ENCODE measurements at regions of chr2 and their contacts with region 1.

Region 1: GRCh38 chr2:55050133-55050994 is at the start of gene RTN4:
- DNase-seq: peak; percentile 99
- H3K4me3 Mint-ChIP-seq: peak within 1 kb of the TSS; percentile 97
- H3K27ac Mint-ChIP-seq: peak within 1 kb of the TSS; percentile 97
- H3K4me1 Mint-ChIP-seq: peaks cover 58% of the 10 kb centered on the region
- H3K27me3 Mint-ChIP-seq: no peaks in the 10 kb centered on the region
- total RNA-seq, gene RTN4: 76.4 to 76.7 TPM

Region 2: GRCh38 chr2:54330162-54330925 is 720.0 kb before region 1 on chr2:
- CTCF ChIA-PET with region 1: no interaction called
- intact Hi-C with region 1: loop called (anchors 5 kb)
- DNase-seq: peak; percentile 93
- H3K4me3 Mint-ChIP-seq: peak overlapping the region; percentile 83
- H3K27ac Mint-ChIP-seq: no peak overlapping the region
- H3K4me1 Mint-ChIP-seq: peaks cover 17% of the 10 kb centered on the region
- H3K27me3 Mint-ChIP-seq: peaks cover 6% of the 10 kb centered on the region

Region 3: GRCh38 chr2:54763636-54764291 is 286.6 kb before region 1 on chr2:
- CTCF ChIA-PET with region 1: no interaction called
- intact Hi-C with region 1: loop called (anchors 1 kb)
- DNase-seq: peak; percentile 53
- H3K4me3 Mint-ChIP-seq: no peak overlapping the region
- H3K27ac Mint-ChIP-seq: no peak overlapping the region
- H3K4me1 Mint-ChIP-seq: peaks cover 12% of the 10 kb centered on the region
- H3K27me3 Mint-ChIP-seq: no peaks in the 10 kb centered on the region

Region 4: DNA sequence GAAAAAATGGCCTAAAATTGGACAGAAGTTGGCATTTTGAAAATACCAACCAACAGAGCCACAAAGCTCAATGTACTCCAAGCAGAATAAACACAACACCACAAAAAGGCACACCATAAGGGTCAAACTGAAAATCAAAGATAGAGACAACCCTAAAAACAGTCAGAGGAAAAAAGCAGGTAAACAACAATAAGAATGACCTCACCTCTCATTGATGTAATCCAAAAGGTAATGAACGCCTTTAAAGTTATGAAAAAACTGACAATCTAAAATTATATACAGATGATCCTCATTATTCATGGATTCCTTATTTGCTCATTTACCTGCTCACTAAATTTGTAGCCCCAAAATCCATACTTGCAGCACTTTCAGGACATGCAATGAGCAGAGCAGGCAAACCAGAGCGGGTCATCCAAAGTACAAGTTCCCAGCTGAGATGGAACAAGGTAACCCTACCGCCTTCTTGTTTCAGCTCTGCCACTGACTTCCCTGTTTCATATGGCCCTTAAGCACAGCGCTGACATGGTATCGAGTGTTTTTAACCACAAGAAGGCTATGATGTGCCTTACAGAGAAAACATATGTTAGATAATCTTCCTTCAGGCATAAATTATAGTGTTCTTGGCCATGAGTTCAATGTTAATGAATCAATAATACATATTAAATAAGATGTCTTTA is 17.2 kb before region 1 on chr2:
- CTCF ChIA-PET with region 1: interaction called, 12 read pairs
- intact Hi-C with region 1: no loop called
- DNase-seq: peak; percentile 22
- H3K4me3 Mint-ChIP-seq: no peak overlapping the region
- H3K27ac Mint-ChIP-seq: no peak overlapping the region
- H3K4me1 Mint-ChIP-seq: peaks cover 59% of the 10 kb centered on the region
- H3K27me3 Mint-ChIP-seq: no peaks in the 10 kb centered on the region

Region 5: GRCh38 chr2:55232084-55232862 is 181.9 kb after region 1 on chr2 and contains the starts of genes CLHC1 and RPS27A:
- CTCF ChIA-PET with region 1: no interaction called
- intact Hi-C with region 1: loop called (anchors 1 kb)
- DNase-seq: peak; percentile 94
- H3K4me3 Mint-ChIP-seq: peak within 1 kb of the TSS; percentile 97
- H3K27ac Mint-ChIP-seq: peak within 1 kb of the TSS; percentile 95
- H3K4me1 Mint-ChIP-seq: peaks cover 52% of the 10 kb centered on the region
- H3K27me3 Mint-ChIP-seq: no peaks in the 10 kb centered on the region
- total RNA-seq, gene CLHC1: 2.4 to 3.1 TPM
- total RNA-seq, gene RPS27A: 1,468 to 1,556 TPM

Region 6: DNA sequence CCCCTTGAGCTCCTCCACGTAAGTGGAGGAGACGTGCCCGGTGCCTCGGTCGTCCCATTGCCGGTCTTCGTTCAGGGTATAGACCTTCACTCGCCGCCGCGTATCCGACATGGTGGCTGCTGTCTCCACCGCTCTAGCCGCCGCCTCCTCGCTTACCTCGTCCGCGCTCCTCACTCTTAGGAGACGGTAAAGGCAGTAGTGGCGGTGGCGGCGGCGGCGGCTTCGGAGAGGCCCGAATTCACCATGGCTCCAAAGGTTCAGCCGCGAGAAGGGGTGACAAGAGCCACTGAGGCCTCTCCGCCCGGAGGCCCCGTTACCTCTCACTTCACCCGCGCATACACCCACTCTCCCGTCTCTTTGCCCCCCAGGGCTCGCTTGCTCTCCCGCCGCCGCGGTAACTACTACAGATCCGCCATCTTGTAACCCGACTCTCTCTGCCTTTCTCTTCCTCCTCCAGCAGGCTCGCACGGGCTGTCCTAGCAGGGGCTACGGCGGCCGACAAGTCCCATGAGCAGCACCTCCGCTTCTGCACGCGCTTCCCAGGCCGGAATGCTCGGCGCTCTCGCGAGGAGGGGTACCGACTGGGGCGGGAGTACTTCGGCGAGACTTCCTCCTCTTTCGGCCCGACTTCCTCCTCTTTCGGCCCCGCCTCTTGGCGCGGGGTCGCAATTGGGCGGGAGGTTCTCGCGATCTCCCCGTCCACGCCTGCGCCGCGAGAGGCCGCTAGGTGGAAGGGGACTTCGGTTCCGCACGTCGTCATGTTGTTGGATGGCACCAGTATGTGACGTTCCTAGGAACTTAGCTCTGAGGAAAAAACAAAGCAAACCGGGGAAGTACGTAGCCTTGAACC is 567.0 kb after region 1 on chr2 and contains the start of gene PPP4R3B:
- CTCF ChIA-PET with region 1: no interaction called
- intact Hi-C with region 1: loop called (anchors 1 kb)
- DNase-seq: peak; percentile 99
- H3K4me3 Mint-ChIP-seq: no peak within 1 kb of the TSS
- H3K27ac Mint-ChIP-seq: no peak within 1 kb of the TSS
- H3K4me1 Mint-ChIP-seq: peaks cover 21% of the 10 kb centered on the region
- H3K27me3 Mint-ChIP-seq: no peaks in the 10 kb centered on the region
- total RNA-seq, gene PPP4R3B: 55.4 to 57.2 TPM